ENCODE measurements at regions of chrX and their contacts with region 1.

Region 1: DNA sequence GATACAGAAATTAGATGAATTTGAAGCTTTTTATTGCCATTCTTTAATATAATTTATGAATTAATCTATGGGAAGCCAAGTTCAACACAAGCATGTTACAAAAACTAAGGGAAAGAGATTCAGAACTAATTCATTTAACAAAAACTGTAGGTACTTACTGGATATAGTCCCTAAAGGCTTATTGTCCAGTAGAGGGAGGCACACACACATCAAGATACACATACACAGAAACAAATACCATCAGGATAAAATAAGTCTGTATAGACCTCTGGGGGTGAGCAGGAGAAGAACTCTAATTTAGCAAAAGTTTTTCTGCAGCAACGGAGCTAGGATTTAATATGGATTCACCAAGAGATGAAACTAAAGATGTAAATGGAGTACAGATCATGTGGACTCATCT is 83.0 kb upstream of the IL13RA1 start:
- DNase-seq: peak; percentile 54
- ATAC-seq: peak; percentile 87
- H3K4me3 ChIP-seq: no peak overlapping the region
- H3K27ac ChIP-seq: no peak overlapping the region
- H3K4me1 ChIP-seq: no peaks in the 10 kb centered on the region
- H3K27me3 ChIP-seq: no peaks in the 10 kb centered on the region
- CTCF ChIP-seq: peak; percentile 58
- EP300 ChIP-seq: no peak
- POLR2A ChIP-seq: no peak
- RAD21 ChIP-seq: peak; percentile 50; the same call in 1 of the 2 replicates

Region 2: GRCh38 chrX:118553042-118553710 is 91.2 kb before region 1 on chrX:
- CTCF ChIA-PET with region 1: no interaction called
- POLR2A ChIA-PET with region 1: no interaction called
- in situ Hi-C with region 1: no loop called
- intact Hi-C with region 1: no loop called
- DNase-seq: no peak
- ATAC-seq: no peak
- H3K4me3 ChIP-seq: no peak overlapping the region
- H3K27ac ChIP-seq: no peak overlapping the region
- H3K4me1 ChIP-seq: no peaks in the 10 kb centered on the region
- H3K27me3 ChIP-seq: no peaks in the 10 kb centered on the region
- CTCF ChIP-seq: no peak
- EP300 ChIP-seq: no peak
- POLR2A ChIP-seq: no peak
- RAD21 ChIP-seq: no peak

Region 3: GRCh38 chrX:118566359-118566758 is 78.0 kb before region 1 on chrX:
- CTCF ChIA-PET with region 1: no interaction called
- POLR2A ChIA-PET with region 1: no interaction called
- in situ Hi-C with region 1: no loop called
- intact Hi-C with region 1: no loop called
- DNase-seq: no peak
- ATAC-seq: no peak
- H3K4me3 ChIP-seq: no peak overlapping the region
- H3K27ac ChIP-seq: no peak overlapping the region
- H3K4me1 ChIP-seq: no peaks in the 10 kb centered on the region
- H3K27me3 ChIP-seq: no peaks in the 10 kb centered on the region
- CTCF ChIP-seq: no peak
- EP300 ChIP-seq: no peak
- POLR2A ChIP-seq: no peak
- RAD21 ChIP-seq: no peak

Region 4: GRCh38 chrX:118770133-118770760 is 125.9 kb after region 1 on chrX:
- CTCF ChIA-PET with region 1: no interaction called
- POLR2A ChIA-PET with region 1: no interaction called
- in situ Hi-C with region 1: no loop called
- intact Hi-C with region 1: no loop called
- DNase-seq: no peak
- ATAC-seq: no peak; the same call in 1 of the 3 replicates
- H3K4me3 ChIP-seq: no peak overlapping the region
- H3K27ac ChIP-seq: no peak overlapping the region
- H3K4me1 ChIP-seq: no peaks in the 10 kb centered on the region
- H3K27me3 ChIP-seq: no peaks in the 10 kb centered on the region
- CTCF ChIP-seq: no peak
- EP300 ChIP-seq: no peak
- POLR2A ChIP-seq: no peak
- RAD21 ChIP-seq: no peak

Region 5: GRCh38 chrX:118807151-118808017 is 163.0 kb after region 1 on chrX:
- CTCF ChIA-PET with region 1: interaction called, 16 read pairs
- POLR2A ChIA-PET with region 1: no interaction called
- in situ Hi-C with region 1: loop called (anchors 5 kb)
- intact Hi-C with region 1: loop called (anchors 1 kb)
- DNase-seq: peak; percentile 33
- ATAC-seq: peak; percentile 68
- H3K4me3 ChIP-seq: no peak overlapping the region
- H3K27ac ChIP-seq: no peak overlapping the region
- H3K4me1 ChIP-seq: no peaks in the 10 kb centered on the region
- H3K27me3 ChIP-seq: no peaks in the 10 kb centered on the region
- CTCF ChIP-seq: peak; percentile 77
- EP300 ChIP-seq: no peak
- POLR2A ChIP-seq: no peak
- RAD21 ChIP-seq: 0 out of 2 replicates have a peak, but pooled peaks have one; percentile 26

Region 6: DNA sequence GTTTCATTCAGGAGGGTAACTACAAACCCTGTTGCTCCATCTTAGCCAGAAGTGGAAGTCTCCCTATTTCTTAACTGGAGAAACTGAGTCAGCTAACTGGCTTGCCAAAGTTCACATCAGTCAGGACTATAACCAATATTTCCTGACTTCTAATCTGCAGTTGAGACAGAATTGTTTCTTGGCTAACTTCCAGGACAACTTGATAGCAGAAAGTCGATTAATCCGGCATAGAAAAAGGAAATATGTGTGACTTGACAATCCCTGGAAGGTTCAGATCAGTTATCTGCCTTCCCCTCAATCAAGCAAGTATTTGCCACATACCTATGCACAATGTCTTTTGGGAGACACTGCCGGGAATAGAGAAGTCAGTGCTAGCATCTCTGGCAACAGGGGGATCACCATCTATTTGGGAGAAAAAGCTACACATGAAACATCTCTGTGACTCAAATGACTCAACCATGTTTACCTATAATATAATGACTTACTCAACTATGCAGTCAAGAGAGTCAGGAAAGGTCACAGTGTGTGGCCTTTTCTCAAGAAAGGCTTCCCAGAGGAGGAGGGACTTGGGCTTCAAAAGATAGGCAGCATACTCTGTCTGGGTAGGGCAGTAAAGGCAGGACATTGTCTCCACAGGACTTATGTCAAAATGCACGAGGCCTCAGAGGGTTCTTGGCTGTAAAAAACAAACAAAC is 317.6 kb after region 1 on chrX:
- CTCF ChIA-PET with region 1: no interaction called
- POLR2A ChIA-PET with region 1: no interaction called
- in situ Hi-C with region 1: no loop called
- intact Hi-C with region 1: no loop called
- DNase-seq: no peak
- ATAC-seq: no peak
- H3K4me3 ChIP-seq: no peak overlapping the region
- H3K27ac ChIP-seq: no peak overlapping the region
- H3K4me1 ChIP-seq: no peaks in the 10 kb centered on the region
- H3K27me3 ChIP-seq: no peaks in the 10 kb centered on the region
- CTCF ChIP-seq: no peak
- EP300 ChIP-seq: no peak
- POLR2A ChIP-seq: no peak
- RAD21 ChIP-seq: no peak

Measured in HepG2 (cell line).